ENCODE measurements at regions of chr22 and their contacts with region 1.

Region 1: GRCh38 chr22:29359469-29359868 is 28.9 kb downstream of the AP1B1 start:
- DNase-seq: peak; percentile 16
- ATAC-seq: peak; percentile 97
- H3K4me3 ChIP-seq: no peak overlapping the region
- H3K27ac ChIP-seq: no peak overlapping the region
- H3K4me1 ChIP-seq: peaks cover 5 to 6% of the 10 kb centered on the region in 2 experiments; a peak in 3 of 4 replicates
- H3K27me3 ChIP-seq: no peaks in the 10 kb centered on the region
- CTCF ChIP-seq: peak; percentile 60 to 77 (median 66); a peak in 5 of 6 replicates
- POLR2A ChIP-seq: no peak
- RAD21 ChIP-seq: peak; percentile 79

Region 2: DNA sequence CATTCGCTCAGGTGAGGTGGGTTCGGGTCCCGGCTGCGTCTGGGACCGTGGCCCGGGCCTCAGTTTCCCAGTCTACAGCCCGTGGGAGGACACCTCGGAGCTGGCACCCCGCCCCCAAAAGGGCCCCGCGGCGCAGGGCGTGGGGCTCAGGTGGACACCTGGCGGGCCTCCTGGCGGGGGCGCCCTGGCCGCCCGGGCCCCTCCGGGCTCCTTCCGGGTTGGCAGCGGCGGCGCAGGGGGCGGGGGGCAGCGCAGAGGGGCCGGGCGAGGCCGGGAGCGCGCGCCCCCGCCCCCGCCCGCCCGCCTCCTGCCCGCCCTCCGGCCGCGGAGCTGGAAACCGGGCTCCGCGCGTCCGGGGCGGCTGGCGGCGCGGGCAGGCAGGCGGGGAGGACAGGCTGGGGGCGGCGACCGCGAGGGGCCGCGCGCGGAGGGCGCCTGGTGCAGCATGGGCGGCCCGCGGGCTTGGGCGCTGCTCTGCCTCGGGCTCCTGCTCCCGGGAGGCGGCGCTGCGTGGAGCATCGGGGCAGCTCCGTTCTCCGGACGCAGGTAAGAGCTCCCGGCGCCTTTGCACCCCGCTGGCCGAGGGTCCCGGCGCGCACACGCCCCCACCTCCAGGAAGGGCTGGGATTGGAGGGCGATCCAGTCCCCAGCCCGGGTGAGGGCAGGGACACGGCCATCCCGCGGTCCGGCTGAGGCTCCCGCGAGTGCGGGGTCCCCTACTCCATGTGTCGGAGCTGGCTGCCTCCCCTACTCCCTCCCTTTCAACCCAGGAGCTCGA is 153.7 kb before region 1 on chr22 and contains the start of gene EMID1:
- CTCF ChIA-PET with region 1: no interaction called
- POLR2A ChIA-PET with region 1: no interaction called
- RAD21 ChIA-PET with region 1: no interaction called
- intact Hi-C with region 1: loop called (anchors 5 kb)
- DNase-seq: no peak
- ATAC-seq: peak; percentile 78
- H3K4me3 ChIP-seq: peak within 1 kb of the TSS; percentile 63 to 82
- H3K27ac ChIP-seq: peak within 1 kb of the TSS; percentile 73; the same call in 1 of the 2 replicates
- H3K4me1 ChIP-seq: peaks cover 4 to 18% of the 10 kb centered on the region in 2 experiments; a peak in 3 of 4 replicates
- H3K27me3 ChIP-seq: no peaks in the 10 kb centered on the region
- CTCF ChIP-seq: 0 out of 6 replicates have a peak, but pooled peaks of 1 of the 3 experiments have one; percentile 11
- POLR2A ChIP-seq: no peak
- RAD21 ChIP-seq: no peak
- total RNA-seq, gene EMID1: 9.6 TPM

Region 3: DNA sequence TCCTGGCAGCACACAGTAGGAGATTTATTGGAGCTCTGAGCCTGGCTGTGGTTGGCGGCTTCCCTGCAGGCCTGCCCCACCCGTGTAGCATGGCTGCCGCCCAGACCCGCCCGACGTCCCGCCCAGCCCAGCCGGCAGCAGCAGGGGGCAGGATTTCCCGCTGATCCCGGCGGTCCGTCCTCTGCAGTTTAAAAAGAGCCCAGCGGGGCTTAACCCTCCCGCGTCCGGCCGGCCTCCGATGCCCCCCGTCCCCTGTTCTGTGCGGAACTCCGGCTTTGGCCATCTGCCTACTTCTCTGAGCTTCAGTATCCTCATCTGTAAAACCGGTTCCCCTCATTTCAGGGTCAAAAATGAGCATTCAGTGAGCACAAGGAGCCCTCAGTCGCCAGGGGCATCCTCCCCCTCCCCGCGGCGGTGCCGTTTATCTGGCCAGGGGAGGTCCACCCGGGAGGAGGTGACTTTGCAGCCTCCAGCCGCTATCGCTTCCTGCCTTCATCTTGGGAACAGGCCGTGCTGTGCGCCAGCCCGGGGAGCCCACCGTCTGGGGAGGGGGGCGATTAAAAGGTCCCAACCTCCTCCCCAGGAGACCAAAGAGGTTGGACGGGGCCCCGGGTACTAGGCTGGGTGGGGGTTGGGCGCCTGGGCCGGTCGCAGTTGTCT is 53.2 kb before region 1 on chr22 and contains the start of gene GAS2L1:
- CTCF ChIA-PET with region 1: no interaction called
- POLR2A ChIA-PET with region 1: no interaction called
- RAD21 ChIA-PET with region 1: interaction called in 1 of 2 experiments, 3 read pairs
- intact Hi-C with region 1: loop called (anchors 1 kb)
- DNase-seq: peak; percentile 51
- ATAC-seq: peak; percentile 72
- H3K4me3 ChIP-seq: peak within 1 kb of the TSS; percentile 74 to 84
- H3K27ac ChIP-seq: peak within 1 kb of the TSS; percentile 81
- H3K4me1 ChIP-seq: peaks cover 48 to 63% of the 10 kb centered on the region in 2 experiments
- H3K27me3 ChIP-seq: no peaks in the 10 kb centered on the region
- CTCF ChIP-seq: peak in 2 of 3 experiments; percentile 38 to 50; a peak in 3 of 6 replicates
- POLR2A ChIP-seq: no peak
- RAD21 ChIP-seq: peak; percentile 59
- total RNA-seq, gene GAS2L1: 29.4 TPM

Region 4: DNA sequence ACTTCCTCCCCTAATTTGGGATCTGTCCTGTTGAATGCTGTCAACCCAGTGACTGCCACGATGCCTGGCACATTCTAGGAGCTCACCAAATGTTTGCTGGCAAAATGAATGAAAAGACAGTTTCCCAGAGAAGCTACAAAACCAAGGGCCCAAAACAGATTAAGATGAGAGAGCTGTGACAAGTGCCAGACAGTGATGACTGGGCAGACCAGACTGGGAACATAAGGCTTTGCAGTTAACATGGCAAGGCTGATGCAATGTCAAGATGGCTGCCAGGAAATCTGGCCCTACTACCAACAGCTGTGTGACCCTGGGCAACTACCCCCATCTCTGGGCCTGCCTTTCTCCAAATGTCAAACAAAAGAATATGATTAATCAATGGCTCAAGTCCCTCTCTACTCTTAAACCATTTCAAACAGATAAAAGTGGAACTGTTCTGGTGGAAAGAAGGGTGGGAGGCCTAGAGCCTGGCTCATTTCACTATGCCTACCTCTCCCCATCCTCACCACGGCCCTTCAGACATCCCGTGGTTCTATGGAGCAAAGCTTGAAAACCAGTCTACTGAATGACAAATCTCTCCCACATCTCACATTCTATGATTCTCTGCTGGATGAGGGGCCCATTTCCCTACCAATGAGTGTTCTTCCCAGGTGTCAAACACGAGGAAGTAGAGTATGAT is 16.1 kb after region 1 on chr22:
- CTCF ChIA-PET with region 1: no interaction called
- POLR2A ChIA-PET with region 1: no interaction called
- RAD21 ChIA-PET with region 1: no interaction called
- intact Hi-C with region 1: no loop called
- DNase-seq: no peak
- ATAC-seq: no peak
- H3K4me3 ChIP-seq: no peak overlapping the region
- H3K27ac ChIP-seq: no peak overlapping the region
- H3K4me1 ChIP-seq: peaks cover 5 to 17% of the 10 kb centered on the region in 2 experiments
- H3K27me3 ChIP-seq: no peaks in the 10 kb centered on the region
- CTCF ChIP-seq: no peak
- POLR2A ChIP-seq: no peak
- RAD21 ChIP-seq: no peak

Region 5: GRCh38 chr22:29487426-29487986 is 128.0 kb after region 1 on chr22:
- CTCF ChIA-PET with region 1: no interaction called
- POLR2A ChIA-PET with region 1: no interaction called
- RAD21 ChIA-PET with region 1: no interaction called
- intact Hi-C with region 1: no loop called
- DNase-seq: no peak
- ATAC-seq: no peak
- H3K4me3 ChIP-seq: no peak overlapping the region
- H3K27ac ChIP-seq: no peak overlapping the region
- H3K4me1 ChIP-seq: no peaks in the 10 kb centered on the region
- H3K27me3 ChIP-seq: no peaks in the 10 kb centered on the region
- CTCF ChIP-seq: no peak
- POLR2A ChIP-seq: no peak
- RAD21 ChIP-seq: no peak

Region 6: DNA sequence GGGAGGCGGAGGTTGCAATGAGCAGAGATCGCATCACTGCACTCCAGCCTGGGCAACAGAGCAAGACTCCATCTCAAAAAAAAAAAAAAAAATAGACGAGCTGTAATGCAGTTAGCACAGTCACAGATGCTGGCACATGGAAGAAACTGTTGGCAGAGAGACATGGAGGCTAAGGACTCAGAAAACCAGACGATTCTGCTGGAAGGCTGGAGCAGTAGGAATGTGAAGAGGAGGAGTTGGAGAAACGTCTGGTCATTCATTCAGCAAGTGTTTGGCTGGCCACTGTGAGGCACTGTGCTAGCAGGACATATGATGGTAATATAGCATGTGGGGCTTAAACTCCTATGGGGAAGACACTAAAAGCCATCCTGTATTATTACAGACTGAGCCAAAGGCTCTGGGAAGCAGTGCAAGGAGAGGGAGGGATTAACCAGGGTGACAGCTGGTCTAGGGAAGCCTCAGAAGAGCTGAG is 412.7 kb after region 1 on chr22:
- CTCF ChIA-PET with region 1: no interaction called
- POLR2A ChIA-PET with region 1: no interaction called
- RAD21 ChIA-PET with region 1: no interaction called
- intact Hi-C with region 1: no loop called
- DNase-seq: peak; percentile 24
- ATAC-seq: peak; percentile 70
- H3K4me3 ChIP-seq: no peak overlapping the region
- H3K27ac ChIP-seq: peak overlapping the region; percentile 73; the same call in 1 of the 2 replicates
- H3K4me1 ChIP-seq: peaks cover 14 to 44% of the 10 kb centered on the region in 2 experiments
- H3K27me3 ChIP-seq: no peaks in the 10 kb centered on the region
- CTCF ChIP-seq: peak in 2 of 3 experiments; percentile 70 to 72; a peak in 5 of 6 replicates
- POLR2A ChIP-seq: no peak
- RAD21 ChIP-seq: peak; percentile 60